Ascending aorta (tissue), 2 donors: ENCODE measurements at regions of chr19 and their contacts with region 1.

Region 1: DNA sequence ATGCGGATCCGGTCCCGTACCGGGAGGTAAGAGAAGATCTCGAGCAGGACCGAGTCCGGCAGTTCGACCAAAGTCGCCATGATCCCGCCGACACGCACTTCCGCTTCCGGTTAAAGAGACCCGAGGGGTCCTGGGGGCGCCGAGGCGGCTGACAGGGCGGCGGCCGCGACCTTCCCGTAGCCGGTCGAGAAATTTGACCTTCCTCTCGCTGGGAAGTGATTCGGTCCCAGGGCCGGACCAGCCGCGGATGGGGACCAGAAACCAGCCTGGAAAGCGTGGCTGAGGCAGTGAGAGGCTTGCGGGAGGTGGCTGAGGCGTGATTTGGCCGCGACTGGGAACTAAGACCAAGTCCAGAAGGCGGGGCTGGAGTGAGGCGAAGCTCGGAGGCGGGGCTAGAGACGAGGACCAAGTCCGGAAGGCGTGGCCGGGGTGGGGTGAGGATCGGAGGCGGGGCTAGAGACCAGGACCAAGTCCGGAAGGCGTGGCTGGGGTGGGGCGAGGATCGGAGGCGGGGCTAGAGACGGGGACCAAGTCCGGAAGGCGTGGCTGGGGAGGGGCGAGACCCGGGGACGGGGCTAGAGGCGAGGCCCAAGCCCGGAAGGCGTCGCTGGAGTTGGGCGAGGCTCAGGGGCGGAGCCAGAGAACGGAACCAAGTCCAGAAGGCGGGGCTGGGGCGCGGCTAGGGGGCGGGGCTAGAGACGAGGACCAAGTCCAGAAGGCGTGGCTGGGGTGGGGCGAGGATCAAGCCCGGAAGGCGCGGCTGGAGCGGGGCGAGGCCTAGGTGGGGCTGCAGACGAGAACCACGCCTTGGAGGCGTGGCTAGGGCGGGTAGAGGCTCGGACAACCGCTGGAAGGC is at the start of gene FBXL12:
- DNase-seq: peak; percentile 100
- H3K4me3 ChIP-seq: peak within 1 kb of the TSS; percentile 69 to 86
- H3K27ac ChIP-seq: peak within 1 kb of the TSS; percentile 89 to 95
- H3K4me1 ChIP-seq: peaks cover 7 to 16% of the 10 kb centered on the region in 2 donors
- H3K27me3 ChIP-seq: no peaks in the 10 kb centered on the region
- CTCF ChIP-seq: no peak
- total RNA-seq, gene FBXL12: 64.4 TPM

Region 2: GRCh38 chr19:9834726-9835506 is 16.0 kb after region 1 on chr19 and contains the start of gene PIN1:
- intact Hi-C with region 1: loop called (anchors 1 kb)
- DNase-seq: peak; percentile 97 to 100
- H3K4me3 ChIP-seq: peak within 1 kb of the TSS; percentile 84 to 96
- H3K27ac ChIP-seq: peak within 1 kb of the TSS; percentile 73 to 74
- H3K4me1 ChIP-seq: peaks cover 8 to 9% of the 10 kb centered on the region in 2 donors
- H3K27me3 ChIP-seq: no peaks in the 10 kb centered on the region
- CTCF ChIP-seq: peak; percentile 66 to 77 (median 68)
- total RNA-seq, gene PIN1: 50.7 TPM